ENCODE measurements at regions of chr6 and their contacts with region 1.

Region 1: GRCh38 chr6:40922281-40922680 is 116.7 kb downstream of the UNC5CL start:
- DNase-seq: no peak
- H3K4me3 ChIP-seq: no peak overlapping the region
- H3K27ac ChIP-seq: no peak overlapping the region
- H3K4me1 ChIP-seq: peaks cover 0 to 13% (median 3%) of the 10 kb centered on the region in 4 experiments; a peak in 5 of 7 replicates
- H3K27me3 ChIP-seq: peaks cover 0 to 5% (median 0%) of the 10 kb centered on the region in 4 experiments; a peak in 1 of 7 replicates
- CTCF ChIP-seq: no peak
- EP300 ChIP-seq: no peak
- POLR2A ChIP-seq: no peak
- RAD21 ChIP-seq: no peak

Region 2: DNA sequence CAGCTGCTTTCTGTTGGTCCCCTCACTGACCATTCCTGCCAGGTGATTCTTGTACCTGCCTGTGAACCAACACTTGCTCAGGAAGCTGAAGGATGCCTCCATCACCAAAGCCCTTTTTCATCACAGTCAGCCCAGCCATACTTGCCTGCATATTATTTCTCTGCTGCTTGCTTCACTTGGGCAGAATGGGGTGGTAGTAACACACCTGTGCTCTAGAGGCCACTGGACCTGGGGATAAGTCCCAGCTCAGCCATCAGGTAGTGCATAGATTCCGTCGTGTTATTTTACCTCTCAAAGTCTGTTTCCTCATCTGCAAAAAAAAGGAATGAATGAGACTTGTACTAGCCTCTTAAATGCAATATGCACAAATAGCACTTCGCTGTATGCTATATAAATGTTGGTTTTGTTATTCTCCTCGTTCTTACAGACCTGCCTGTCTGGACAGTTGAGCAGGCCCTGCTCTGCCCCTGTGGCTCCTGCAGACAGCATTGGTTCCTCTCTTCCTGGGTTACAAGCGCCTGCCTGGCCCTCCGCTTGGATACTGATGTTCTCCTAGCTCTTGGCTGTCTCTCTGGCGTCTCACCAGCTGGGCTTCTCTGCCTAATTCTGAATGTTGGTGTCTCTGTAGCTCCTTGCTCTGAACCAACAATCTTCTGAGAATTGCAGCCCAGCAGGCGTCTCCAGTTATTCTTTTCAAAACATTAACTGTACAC is 35.0 kb before region 1 on chr6:
- CTCF ChIA-PET with region 1: interaction called, 15 read pairs
- POLR2A ChIA-PET with region 1: no interaction called
- DNase-seq: no peak
- H3K4me3 ChIP-seq: no peak overlapping the region
- H3K27ac ChIP-seq: no peak overlapping the region
- H3K4me1 ChIP-seq: no peaks in the 10 kb centered on the region
- H3K27me3 ChIP-seq: no peaks in the 10 kb centered on the region
- CTCF ChIP-seq: peak in 1 of 3 experiments; percentile 28; a peak in 1 of 4 replicates
- EP300 ChIP-seq: no peak
- POLR2A ChIP-seq: no peak
- RAD21 ChIP-seq: no peak; a peak in 1 of 4 replicates

Region 3: GRCh38 chr6:40907198-40907704 is 15.0 kb before region 1 on chr6:
- CTCF ChIA-PET with region 1: interaction called, 10 read pairs
- POLR2A ChIA-PET with region 1: no interaction called
- DNase-seq: no peak
- H3K4me3 ChIP-seq: no peak overlapping the region
- H3K27ac ChIP-seq: no peak overlapping the region
- H3K4me1 ChIP-seq: no peaks in the 10 kb centered on the region
- H3K27me3 ChIP-seq: peaks cover 0 to 4% (median 0%) of the 10 kb centered on the region in 4 experiments; a peak in 1 of 7 replicates
- CTCF ChIP-seq: no peak
- EP300 ChIP-seq: no peak
- POLR2A ChIP-seq: no peak
- RAD21 ChIP-seq: no peak

Region 4: GRCh38 chr6:40978687-40979289 is 56.5 kb after region 1 on chr6:
- CTCF ChIA-PET with region 1: no interaction called
- POLR2A ChIA-PET with region 1: no interaction called
- DNase-seq: peak in 1 of 2 experiments; percentile 32
- H3K4me3 ChIP-seq: no peak overlapping the region
- H3K27ac ChIP-seq: no peak overlapping the region
- H3K4me1 ChIP-seq: peaks cover 0 to 7% (median 2%) of the 10 kb centered on the region in 4 experiments; a peak in 5 of 7 replicates
- H3K27me3 ChIP-seq: no peaks in the 10 kb centered on the region
- CTCF ChIP-seq: no peak
- EP300 ChIP-seq: no peak
- POLR2A ChIP-seq: no peak
- RAD21 ChIP-seq: no peak

Region 5: GRCh38 chr6:41066867-41067304 is 144.6 kb after region 1 on chr6:
- CTCF ChIA-PET with region 1: interaction called, 10 read pairs
- POLR2A ChIA-PET with region 1: no interaction called
- DNase-seq: peak in 1 of 2 experiments; percentile 70
- H3K4me3 ChIP-seq: no peak overlapping the region
- H3K27ac ChIP-seq: no peak overlapping the region
- H3K4me1 ChIP-seq: peaks cover 0 to 4% (median 1%) of the 10 kb centered on the region in 4 experiments; a peak in 2 of 7 replicates
- H3K27me3 ChIP-seq: no peaks in the 10 kb centered on the region
- CTCF ChIP-seq: peak in 2 of 3 experiments; percentile 54 to 79; a peak in 2 of 4 replicates
- EP300 ChIP-seq: no peak
- POLR2A ChIP-seq: no peak
- RAD21 ChIP-seq: peak; percentile 72 to 77

Measured in H1 (cell line).